ENCODE measurements at regions of chr15 and their contacts with region 1.

Region 1: GRCh38 chr15:74787251-74788041 is 5.6 kb downstream of the CSK start:
- H3K4me3 ChIP-seq: no peak overlapping the region
- H3K27ac ChIP-seq: no peak overlapping the region
- H3K4me1 ChIP-seq: peaks cover 59% of the 10 kb centered on the region
- CTCF ChIP-seq: peak; percentile 89

Region 2: DNA sequence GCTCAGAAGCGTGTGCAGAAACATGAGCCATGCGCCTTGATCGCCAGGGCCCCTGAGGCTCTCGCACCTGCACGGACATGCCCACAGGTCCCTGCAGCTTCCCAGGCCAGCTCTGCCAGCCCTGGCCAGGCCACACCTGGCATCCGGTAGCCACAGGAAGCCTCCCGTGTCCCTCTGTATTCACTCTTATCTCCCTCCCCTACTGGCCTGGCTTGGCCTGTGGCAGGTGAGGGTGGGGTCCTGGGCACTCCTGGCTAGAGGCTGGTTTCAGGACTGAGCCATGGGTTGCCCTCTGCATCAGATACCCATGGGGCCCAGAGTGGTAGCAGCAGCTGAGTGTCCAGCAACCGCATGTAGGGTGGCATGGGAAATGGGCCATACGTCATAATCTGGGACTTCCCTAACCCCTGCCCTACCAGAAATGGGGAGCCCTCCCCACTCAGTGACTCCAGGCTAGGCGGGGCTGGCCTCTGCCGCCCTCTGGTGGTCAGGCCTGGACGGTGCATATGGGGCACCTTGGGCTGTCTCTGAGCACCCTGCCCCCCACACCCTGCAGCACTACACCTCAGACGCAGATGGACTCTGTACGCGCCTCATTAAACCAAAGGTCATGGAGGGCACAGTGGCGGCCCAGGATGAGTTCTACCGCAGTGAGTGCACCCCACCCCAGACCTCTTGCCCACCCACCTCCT is 12.6 kb after region 1 on chr15:
- CTCF ChIA-PET with region 1: interaction called, 649 read pairs
- POLR2A ChIA-PET with region 1: interaction called, 4 read pairs
- H3K4me3 ChIP-seq: no peak overlapping the region
- H3K27ac ChIP-seq: peak overlapping the region; percentile 20; the same call in 1 of the 2 replicates
- H3K4me1 ChIP-seq: no peaks in the 10 kb centered on the region
- CTCF ChIP-seq: peak; percentile 97

Region 3: DNA sequence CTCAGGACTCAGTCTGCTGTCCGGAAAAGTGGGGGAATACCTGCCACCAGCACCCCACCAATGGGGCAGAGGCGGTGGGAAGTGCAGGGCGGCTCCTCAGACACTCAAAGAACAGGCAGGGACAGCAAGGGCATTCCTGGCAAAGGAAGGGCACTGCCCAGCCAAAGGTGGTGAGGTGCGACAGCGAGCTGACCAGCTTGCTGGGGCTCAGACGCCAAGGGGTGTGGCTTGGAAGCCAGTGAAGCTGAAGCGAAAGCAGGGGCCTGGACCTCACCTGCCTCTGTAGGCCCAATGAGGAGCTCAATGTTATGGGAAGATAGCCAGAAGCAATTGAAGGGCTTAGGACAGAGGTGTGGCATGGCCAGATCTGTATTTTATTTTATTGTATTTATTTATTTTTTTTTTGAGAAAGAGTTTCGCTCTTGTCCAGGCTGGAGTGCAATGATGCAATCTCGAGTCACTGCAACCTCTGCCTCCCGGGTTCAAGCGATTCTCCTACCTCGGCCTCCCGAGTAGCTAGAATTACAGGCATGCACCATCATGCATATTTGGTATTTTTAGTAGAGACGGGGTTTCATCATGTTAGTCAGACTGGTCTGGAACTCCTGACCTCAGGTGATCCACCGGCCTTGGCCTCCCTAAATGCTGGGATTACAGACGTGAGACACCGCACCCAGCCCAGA is 20.8 kb after region 1 on chr15:
- CTCF ChIA-PET with region 1: interaction called, 13 read pairs
- POLR2A ChIA-PET with region 1: interaction called, 4 read pairs
- H3K4me3 ChIP-seq: no peak overlapping the region
- H3K27ac ChIP-seq: no peak overlapping the region
- H3K4me1 ChIP-seq: no peaks in the 10 kb centered on the region
- CTCF ChIP-seq: no peak

Region 4: GRCh38 chr15:74842581-74843444 is 55.4 kb after region 1 on chr15 and contains the start of gene ULK3:
- CTCF ChIA-PET with region 1: interaction called, 11 read pairs
- POLR2A ChIA-PET with region 1: interaction called, 5 read pairs
- H3K4me3 ChIP-seq: peak within 1 kb of the TSS; percentile 88
- H3K27ac ChIP-seq: peak within 1 kb of the TSS; percentile 86
- H3K4me1 ChIP-seq: peaks cover 10% of the 10 kb centered on the region
- CTCF ChIP-seq: peak; percentile 99

Measured in HEK293 (cell line).